ENCODE measurements at regions of chr3 and their contacts with region 1.

Region 1: GRCh38 chr3:98039322-98040024 is 4.4 kb upstream of the GABRR3 start:
- DNase-seq: peak; percentile 4 to 15
- ATAC-seq: peak; percentile 94 to 96
- H3K4me3 ChIP-seq: peak overlapping the region; percentile 16 to 36 (median 27)
- H3K27ac ChIP-seq: no peak overlapping the region
- H3K4me1 ChIP-seq: no peaks in the 10 kb centered on the region
- H3K27me3 ChIP-seq: no peaks in the 10 kb centered on the region
- CTCF ChIP-seq: peak; percentile 50 to 82 (median 75)
- POLR2A ChIP-seq: no peak

Region 2: GRCh38 chr3:97901313-97902248 is 137.9 kb before region 1 on chr3:
- in situ Hi-C with region 1: no loop called
- intact Hi-C with region 1: no loop called
- DNase-seq: no peak
- ATAC-seq: peak; percentile 26 to 39
- H3K4me3 ChIP-seq: no peak overlapping the region
- H3K27ac ChIP-seq: peak overlapping the region; percentile 46 to 73 (median 54)
- H3K4me1 ChIP-seq: peaks cover 0 to 6% of the 10 kb centered on the region in 2 donors
- H3K27me3 ChIP-seq: no peaks in the 10 kb centered on the region
- CTCF ChIP-seq: no peak
- POLR2A ChIP-seq: no peak

Region 3: DNA sequence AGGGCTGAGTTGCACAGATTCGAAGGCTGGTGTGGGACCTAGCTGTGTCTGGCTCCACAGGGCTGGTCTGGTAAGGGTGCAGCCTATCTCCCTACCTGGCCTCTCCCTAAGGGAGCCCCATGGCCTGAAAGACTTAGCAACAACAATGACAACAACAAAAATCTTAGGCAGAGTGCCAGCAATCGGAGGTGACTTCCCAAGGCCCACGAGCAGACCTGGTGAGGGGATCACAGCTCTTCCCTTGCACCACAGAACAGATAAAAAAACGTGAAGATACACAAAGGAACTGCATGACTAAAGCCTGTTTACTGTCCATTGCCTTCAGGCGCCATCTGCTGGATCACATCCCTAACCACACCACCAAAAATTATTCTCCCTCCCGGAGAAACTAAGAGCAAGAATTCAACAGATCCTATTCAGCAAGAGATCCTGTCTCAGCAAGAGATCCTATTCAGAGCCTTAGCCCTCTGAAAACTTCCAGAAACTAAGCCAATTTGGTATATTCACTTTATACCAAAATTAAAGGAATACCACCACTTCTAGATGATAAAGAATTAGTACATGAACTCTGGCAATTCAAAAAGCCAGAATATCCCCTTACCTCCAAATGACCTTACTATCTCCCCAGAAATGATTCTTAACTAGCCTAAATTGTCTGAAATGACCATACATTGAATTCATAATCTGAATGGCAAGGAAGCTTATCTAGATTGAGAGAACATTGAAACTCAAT is 290.1 kb after region 1 on chr3:
- in situ Hi-C with region 1: loop called (anchors 5 to 25 kb)
- intact Hi-C with region 1: loop called (anchors 1 kb)
- DNase-seq: no peak
- ATAC-seq: no peak
- H3K4me3 ChIP-seq: no peak overlapping the region
- H3K27ac ChIP-seq: no peak overlapping the region
- H3K4me1 ChIP-seq: no peaks in the 10 kb centered on the region
- H3K27me3 ChIP-seq: no peaks in the 10 kb centered on the region
- CTCF ChIP-seq: peak; percentile 9 to 50 (median 40)
- POLR2A ChIP-seq: no peak

Region 4: GRCh38 chr3:99466331-99466730 is 1426.9 kb after region 1 on chr3:
- in situ Hi-C with region 1: no loop called
- intact Hi-C with region 1: no loop called
- DNase-seq: no peak
- ATAC-seq: no peak
- H3K4me3 ChIP-seq: no peak overlapping the region
- H3K27ac ChIP-seq: no peak overlapping the region
- H3K4me1 ChIP-seq: no peaks in the 10 kb centered on the region
- H3K27me3 ChIP-seq: no peaks in the 10 kb centered on the region
- CTCF ChIP-seq: no peak
- POLR2A ChIP-seq: no peak

Measured in gastrocnemius medialis (tissue), 4 donors.